OCI-LY7 (cell line): ENCODE measurements at regions of chr4 and their contacts with region 1.

Region 1: DNA sequence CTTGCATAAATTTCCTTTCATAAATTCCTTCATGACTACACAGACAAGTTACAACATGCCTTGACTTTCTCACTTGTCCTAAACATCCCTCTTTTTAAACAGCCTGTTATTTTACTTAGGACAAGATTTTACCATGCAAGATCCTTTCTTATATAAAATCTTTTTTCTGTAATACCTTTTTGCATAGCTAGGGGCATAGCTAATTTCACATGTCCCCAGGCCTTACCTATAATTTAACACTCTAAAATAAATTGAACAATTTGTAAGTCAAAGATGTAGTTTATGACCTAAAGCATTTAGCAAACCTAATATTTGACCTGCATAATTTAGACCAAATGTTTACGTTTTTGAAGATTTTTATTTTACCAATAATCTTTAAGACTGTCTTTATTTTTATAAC is 396.3 kb upstream of the FSTL5 start:
- DNase-seq: no peak
- H3K4me3 ChIP-seq: no peak overlapping the region
- H3K27ac ChIP-seq: no peak overlapping the region
- H3K4me1 ChIP-seq: no peaks in the 10 kb centered on the region
- CTCF ChIP-seq: peak; percentile 24; the same call in 1 of the 2 replicates

Region 2: GRCh38 chr4:162475246-162475645 is 84.8 kb before region 1 on chr4:
- CTCF ChIA-PET with region 1: no interaction called
- POLR2A ChIA-PET with region 1: no interaction called
- intact Hi-C with region 1: no loop called
- DNase-seq: no peak
- H3K4me3 ChIP-seq: no peak overlapping the region
- H3K27ac ChIP-seq: no peak overlapping the region
- H3K4me1 ChIP-seq: no peaks in the 10 kb centered on the region
- CTCF ChIP-seq: no peak

Region 3: DNA sequence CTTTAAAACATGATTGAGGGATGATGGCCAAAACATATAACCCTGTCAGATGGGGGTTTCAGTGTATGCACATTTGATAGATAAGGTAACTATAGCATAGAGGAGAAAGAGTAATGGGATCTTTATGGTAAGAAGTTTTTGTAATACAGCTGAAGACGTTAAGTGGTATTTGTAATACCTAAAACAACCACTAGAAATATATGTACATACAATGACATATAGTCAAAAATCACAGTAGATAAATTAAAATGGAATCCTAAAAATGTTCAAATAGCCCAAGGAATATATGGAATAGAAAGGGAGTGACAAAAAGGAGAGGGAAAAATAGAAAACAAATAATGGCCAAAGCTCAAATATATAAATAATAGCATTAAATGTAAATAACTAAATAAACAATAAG is 25.0 kb before region 1 on chr4:
- CTCF ChIA-PET with region 1: no interaction called
- POLR2A ChIA-PET with region 1: no interaction called
- intact Hi-C with region 1: no loop called
- DNase-seq: no peak
- H3K4me3 ChIP-seq: no peak overlapping the region
- H3K27ac ChIP-seq: no peak overlapping the region
- H3K4me1 ChIP-seq: no peaks in the 10 kb centered on the region
- CTCF ChIP-seq: peak; percentile 56

Region 4: GRCh38 chr4:164345756-164346155 is 1785.7 kb after region 1 on chr4:
- CTCF ChIA-PET with region 1: no interaction called
- POLR2A ChIA-PET with region 1: interaction called, 3 read pairs
- intact Hi-C with region 1: loop called (anchors 10 kb)
- DNase-seq: no peak
- H3K4me3 ChIP-seq: no peak overlapping the region
- H3K27ac ChIP-seq: no peak overlapping the region
- H3K4me1 ChIP-seq: no peaks in the 10 kb centered on the region
- CTCF ChIP-seq: no peak